ENCODE measurements at regions of chr2 and their contacts with region 1.

Region 1: DNA sequence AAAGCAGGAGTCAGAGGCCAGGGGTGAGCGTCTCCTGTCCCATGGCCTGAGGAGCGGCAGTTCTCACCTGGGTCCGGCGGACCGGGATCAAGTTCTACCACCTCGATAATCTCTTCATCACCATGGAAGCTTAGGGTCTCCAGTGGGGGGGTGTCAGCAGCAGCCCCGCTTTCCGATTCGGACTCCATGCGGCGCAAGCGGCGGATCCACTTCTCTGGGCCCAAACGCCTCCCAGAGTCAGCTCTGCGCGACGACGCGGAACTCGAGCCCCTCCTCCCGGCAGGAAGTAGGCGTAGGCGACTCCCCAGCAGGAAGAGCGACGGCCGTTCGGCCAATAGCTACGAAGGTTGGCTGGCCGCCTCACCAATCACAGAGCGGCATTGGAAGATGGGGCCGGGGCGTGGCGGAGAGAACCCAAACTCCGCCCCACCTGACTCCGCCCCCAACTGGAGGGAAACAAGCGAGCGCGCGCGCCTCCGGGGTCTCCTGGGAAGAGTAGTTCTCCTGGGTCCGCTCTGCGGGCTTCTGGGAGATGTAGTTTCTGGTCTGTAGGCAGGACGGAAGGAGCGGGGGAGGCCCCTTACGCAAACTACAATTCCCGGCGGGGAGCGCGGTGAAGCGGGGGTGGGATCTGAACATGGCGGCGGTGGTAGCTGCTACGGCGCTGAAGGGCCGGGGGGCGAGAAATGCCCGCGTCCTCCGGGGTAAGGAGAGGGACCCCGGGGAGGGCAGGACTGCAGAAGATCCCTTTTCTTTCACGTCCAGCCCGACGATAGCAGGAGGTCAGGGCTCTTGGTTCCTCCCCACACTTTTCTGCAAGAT is at the starts of genes AAMP and PNKD:
- DNase-seq: peak; percentile 96
- ATAC-seq: peak; percentile 92
- H3K4me3 ChIP-seq: peak within 1 kb of the TSS; percentile 90
- H3K27ac ChIP-seq: peak within 1 kb of the TSS; percentile 74
- H3K4me1 ChIP-seq: peaks cover 18% of the 10 kb centered on the region
- H3K27me3 ChIP-seq: no peaks in the 10 kb centered on the region
- CTCF ChIP-seq: peak in 2 of 3 experiments; percentile 10 to 33; a peak in 2 of 6 replicates
- EP300 ChIP-seq: no peak
- POLR2A ChIP-seq: peak; percentile 89
- RAD21 ChIP-seq: no peak
- polyA plus RNA-seq, gene AAMP: 4.4 to 5.5 TPM
- polyA plus RNA-seq, gene PNKD: 72.6 to 104 TPM

Region 2: DNA sequence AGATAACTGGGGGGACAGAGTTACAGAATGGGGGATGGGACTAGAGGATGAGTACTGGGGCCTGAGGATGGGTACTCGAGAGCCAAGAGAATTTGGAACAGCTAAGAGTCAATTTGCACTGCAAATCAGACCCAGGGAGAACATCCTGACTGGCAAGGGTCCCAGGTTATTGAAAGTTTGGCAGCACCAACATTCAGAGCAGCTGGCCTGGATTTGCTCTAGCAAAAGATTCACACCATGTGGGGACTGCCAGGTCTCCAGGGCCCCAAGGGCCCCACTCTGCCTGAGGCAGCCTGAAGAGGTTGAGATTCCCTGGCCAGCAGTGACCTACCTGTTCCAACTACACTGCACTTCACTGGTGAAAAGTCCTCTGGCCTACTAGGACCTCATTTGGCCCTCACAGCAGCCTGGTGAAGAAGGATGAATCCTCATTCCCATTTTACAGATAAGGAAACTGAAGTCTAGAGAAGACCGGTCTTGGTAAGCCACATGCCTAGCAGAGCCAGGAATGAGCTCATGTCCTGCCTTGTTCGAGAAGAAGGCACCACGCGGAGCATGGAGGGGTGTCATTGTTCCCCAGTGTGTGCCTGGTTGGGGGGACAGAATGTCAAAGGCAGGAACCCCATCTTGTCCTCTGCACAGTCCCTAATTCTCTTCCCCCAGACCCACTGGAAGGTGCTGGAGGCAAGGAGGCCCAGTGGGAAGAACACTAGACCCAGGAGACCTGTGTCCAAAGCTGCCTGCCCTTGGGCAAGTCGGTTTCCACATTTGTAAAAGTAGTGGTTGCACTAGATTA is 525.9 kb before region 1 on chr2:
- CTCF ChIA-PET with region 1: no interaction called
- POLR2A ChIA-PET with region 1: no interaction called
- RAD21 ChIA-PET with region 1: no interaction called
- SMC1A ChIA-PET with region 1: no interaction called
- in situ Hi-C with region 1: no loop called
- intact Hi-C with region 1: no loop called
- DNase-seq: no peak
- ATAC-seq: no peak
- H3K4me3 ChIP-seq: no peak overlapping the region
- H3K27ac ChIP-seq: no peak overlapping the region
- H3K4me1 ChIP-seq: no peaks in the 10 kb centered on the region
- H3K27me3 ChIP-seq: peaks cover 0 to under 1% of the 10 kb centered on the region in 2 experiments; a peak in 2 of 4 replicates
- CTCF ChIP-seq: no peak
- EP300 ChIP-seq: no peak
- POLR2A ChIP-seq: no peak
- RAD21 ChIP-seq: no peak

Region 3: DNA sequence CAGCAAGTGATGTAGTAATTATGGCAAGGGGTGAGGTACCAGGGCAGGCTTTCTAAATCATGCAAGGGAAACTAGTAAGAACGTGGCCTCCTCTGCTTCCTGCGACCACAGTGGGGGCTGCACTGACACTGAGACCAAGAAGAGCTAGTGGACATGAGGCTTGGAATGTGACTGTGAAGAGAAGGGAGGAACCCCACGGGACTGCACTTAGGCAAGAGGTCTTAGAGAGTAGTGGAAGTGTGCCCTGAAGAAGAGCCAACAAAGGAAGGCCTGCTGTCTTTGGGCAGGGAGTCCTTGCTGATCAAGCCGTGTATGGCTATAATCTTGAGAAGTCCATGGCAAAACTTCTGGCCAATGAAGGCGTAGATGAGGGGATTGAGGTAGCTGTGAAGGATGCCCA is 210.0 kb before region 1 on chr2:
- CTCF ChIA-PET with region 1: no interaction called
- POLR2A ChIA-PET with region 1: no interaction called
- RAD21 ChIA-PET with region 1: no interaction called
- SMC1A ChIA-PET with region 1: no interaction called
- in situ Hi-C with region 1: no loop called
- intact Hi-C with region 1: no loop called
- DNase-seq: no peak
- ATAC-seq: no peak
- H3K4me3 ChIP-seq: no peak overlapping the region
- H3K27ac ChIP-seq: no peak overlapping the region
- H3K4me1 ChIP-seq: peaks cover 11% of the 10 kb centered on the region
- H3K27me3 ChIP-seq: no peaks in the 10 kb centered on the region; a peak in 1 of 4 replicates
- CTCF ChIP-seq: no peak
- EP300 ChIP-seq: no peak
- POLR2A ChIP-seq: no peak
- RAD21 ChIP-seq: no peak

Region 4: DNA sequence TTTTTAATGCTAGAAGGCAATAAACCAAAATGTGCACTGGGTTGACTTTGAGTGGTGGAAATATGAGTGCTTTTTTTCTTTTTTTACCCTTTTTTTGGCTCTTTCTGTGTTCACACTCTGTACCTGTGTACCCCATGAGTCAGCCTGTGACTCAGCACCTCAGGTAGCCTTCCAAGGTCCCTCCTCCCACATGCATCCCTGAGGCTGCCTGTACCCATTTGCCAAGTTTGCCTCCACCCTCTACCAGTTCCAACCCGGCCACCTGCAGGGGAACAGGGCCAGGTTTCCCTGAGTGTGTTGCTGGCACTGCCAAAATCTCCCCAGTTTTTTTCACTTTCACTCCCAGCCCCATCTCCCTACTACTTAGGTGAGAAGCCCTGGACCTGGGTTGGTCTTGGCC is 117.3 kb before region 1 on chr2:
- CTCF ChIA-PET with region 1: no interaction called
- POLR2A ChIA-PET with region 1: no interaction called
- RAD21 ChIA-PET with region 1: no interaction called
- SMC1A ChIA-PET with region 1: no interaction called
- in situ Hi-C with region 1: no loop called
- intact Hi-C with region 1: no loop called
- DNase-seq: no peak
- ATAC-seq: no peak
- H3K4me3 ChIP-seq: no peak overlapping the region
- H3K27ac ChIP-seq: no peak overlapping the region
- H3K4me1 ChIP-seq: peaks cover 4% of the 10 kb centered on the region
- H3K27me3 ChIP-seq: peaks cover 0 to 2% of the 10 kb centered on the region in 2 experiments; a peak in 1 of 4 replicates
- CTCF ChIP-seq: no peak
- EP300 ChIP-seq: no peak
- POLR2A ChIP-seq: no peak
- RAD21 ChIP-seq: no peak

Region 5: DNA sequence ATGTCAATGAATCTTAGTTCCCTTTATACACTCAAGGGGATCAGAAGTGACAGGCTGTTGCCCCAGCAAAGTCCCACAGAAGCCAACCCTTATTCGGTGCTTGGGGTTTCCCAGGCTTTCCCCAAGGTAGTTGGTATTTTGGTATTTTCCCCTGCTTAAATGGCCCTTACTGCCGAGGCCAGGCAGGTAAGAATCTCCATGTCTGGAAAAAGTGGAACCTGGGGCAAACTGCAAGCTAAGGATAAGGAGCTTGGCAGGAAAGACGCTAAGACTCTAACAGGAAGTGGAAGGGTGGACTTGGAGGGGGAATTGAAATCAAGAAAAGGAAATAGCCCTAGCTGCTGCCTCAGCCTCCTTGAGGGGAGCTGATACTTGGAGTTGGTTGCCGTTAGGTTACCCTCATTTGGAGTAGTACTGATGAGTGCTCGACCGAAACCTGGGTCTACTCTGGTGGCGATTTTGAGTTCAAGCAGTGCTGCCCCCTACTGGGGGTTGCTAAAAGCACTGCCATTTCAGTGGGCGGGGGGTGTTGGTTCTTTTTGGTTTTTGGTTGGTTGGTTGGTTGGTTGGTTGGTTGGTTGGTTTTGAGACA is 12.6 kb before region 1 on chr2:
- CTCF ChIA-PET with region 1: interaction called, 22 read pairs
- POLR2A ChIA-PET with region 1: interaction called, 19 read pairs
- RAD21 ChIA-PET with region 1: interaction called, 8 read pairs
- SMC1A ChIA-PET with region 1: interaction called, 3 read pairs
- in situ Hi-C with region 1: no loop called
- intact Hi-C with region 1: no loop called
- DNase-seq: peak; percentile 56
- ATAC-seq: peak; percentile 90
- H3K4me3 ChIP-seq: no peak overlapping the region
- H3K27ac ChIP-seq: peak overlapping the region; percentile 31
- H3K4me1 ChIP-seq: peaks cover 31% of the 10 kb centered on the region
- H3K27me3 ChIP-seq: no peaks in the 10 kb centered on the region
- CTCF ChIP-seq: peak; percentile 58 to 77 (median 76)
- EP300 ChIP-seq: no peak
- POLR2A ChIP-seq: no peak
- RAD21 ChIP-seq: peak; percentile 51

Region 6: GRCh38 chr2:218292048-218293014 is 22.2 kb after region 1 on chr2 and contains the start of gene TMBIM1:
- CTCF ChIA-PET with region 1: interaction called, 154 read pairs
- POLR2A ChIA-PET with region 1: interaction called, 84 read pairs
- RAD21 ChIA-PET with region 1: interaction called, 141 read pairs
- SMC1A ChIA-PET with region 1: interaction called, 194 read pairs
- in situ Hi-C with region 1: no loop called
- intact Hi-C with region 1: loop called (anchors 1 kb)
- DNase-seq: no peak
- ATAC-seq: peak; percentile 87
- H3K4me3 ChIP-seq: peak within 1 kb of the TSS; percentile 85
- H3K27ac ChIP-seq: peak within 1 kb of the TSS; percentile 72
- H3K4me1 ChIP-seq: peaks cover 28% of the 10 kb centered on the region
- H3K27me3 ChIP-seq: no peaks in the 10 kb centered on the region
- CTCF ChIP-seq: peak; percentile 68 to 92 (median 85)
- EP300 ChIP-seq: no peak
- POLR2A ChIP-seq: peak; percentile 58
- RAD21 ChIP-seq: peak; percentile 51
- polyA plus RNA-seq, gene TMBIM1: 6.1 to 11.7 TPM

Region 7: DNA sequence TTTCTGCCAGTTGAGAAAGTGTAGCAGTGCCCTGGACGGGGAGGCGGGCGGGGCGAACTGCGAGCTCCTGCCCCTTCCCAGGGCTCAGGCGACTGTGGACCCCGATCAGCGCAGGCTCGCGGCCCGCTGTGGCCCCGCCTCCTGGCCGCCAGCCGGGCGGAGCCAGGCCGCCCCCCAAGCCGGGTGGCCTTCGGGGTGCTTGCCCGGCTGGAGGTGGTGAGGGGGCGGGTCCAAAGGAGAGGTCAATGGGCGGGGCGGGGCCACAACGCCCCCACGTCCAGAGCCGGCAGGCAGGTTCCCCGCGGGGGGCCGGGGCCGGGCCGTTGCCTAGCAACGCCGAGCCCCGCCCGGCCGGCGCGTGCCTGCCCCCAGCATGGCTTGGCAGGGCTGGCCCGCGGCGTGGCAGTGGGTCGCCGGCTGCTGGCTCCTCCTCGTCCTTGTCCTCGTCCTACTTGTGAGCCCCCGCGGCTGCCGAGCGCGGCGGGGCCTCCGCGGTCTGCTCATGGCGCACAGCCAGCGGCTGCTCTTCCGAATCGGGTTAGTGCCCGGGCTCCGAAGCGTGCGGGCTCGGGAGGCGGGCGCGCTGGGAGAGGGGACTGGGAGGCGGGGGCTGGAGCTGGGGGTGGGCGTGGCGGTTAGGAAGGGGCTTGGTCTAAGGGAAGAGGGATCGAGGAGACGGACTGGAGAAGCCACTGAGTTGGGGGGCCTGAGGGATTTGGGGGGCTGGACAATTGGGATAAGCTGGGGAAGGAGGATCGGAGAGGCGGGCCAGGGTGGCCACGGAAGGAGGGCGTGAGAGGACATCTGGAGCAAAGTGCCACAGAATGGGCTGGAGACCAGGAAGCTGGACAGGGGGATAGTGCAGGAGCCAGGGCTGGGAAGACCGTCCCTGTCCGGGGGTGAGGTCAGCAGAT is 53.0 kb after region 1 on chr2:
- CTCF ChIA-PET with region 1: interaction called, 10 read pairs
- POLR2A ChIA-PET with region 1: no interaction called
- RAD21 ChIA-PET with region 1: no interaction called
- SMC1A ChIA-PET with region 1: no interaction called
- in situ Hi-C with region 1: no loop called
- intact Hi-C with region 1: no loop called
- DNase-seq: no peak
- ATAC-seq: peak; percentile 87
- H3K4me3 ChIP-seq: peak overlapping the region; percentile 69
- H3K27ac ChIP-seq: no peak overlapping the region
- H3K4me1 ChIP-seq: peaks cover 15% of the 10 kb centered on the region
- H3K27me3 ChIP-seq: no peaks in the 10 kb centered on the region
- CTCF ChIP-seq: no peak
- EP300 ChIP-seq: no peak
- POLR2A ChIP-seq: peak; percentile 35; the same call in 1 of the 2 replicates
- RAD21 ChIP-seq: no peak

Region 8: DNA sequence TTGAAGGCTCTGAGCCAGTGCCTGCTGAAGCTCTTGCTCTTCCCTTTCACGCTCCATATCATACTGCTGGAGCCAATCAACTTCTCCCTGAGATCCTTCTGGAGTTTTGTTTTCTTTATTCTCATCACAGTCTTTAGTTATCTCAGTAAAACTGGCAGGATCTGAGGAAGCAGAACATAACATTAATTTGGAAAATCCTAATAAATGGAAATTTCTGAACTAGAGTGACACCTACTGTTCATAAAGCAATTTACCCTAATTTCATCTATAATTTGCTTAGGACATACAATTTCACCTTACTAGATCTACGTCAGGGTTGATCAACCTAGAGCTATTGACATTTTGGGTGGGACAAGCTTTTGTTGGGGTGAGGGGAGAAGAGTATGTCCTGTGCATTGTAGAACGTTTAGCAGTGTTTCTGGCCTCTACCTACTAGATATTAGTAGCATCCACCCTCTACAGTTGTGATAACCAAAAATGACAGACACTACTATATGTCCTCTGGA is 196.0 kb after region 1 on chr2:
- CTCF ChIA-PET with region 1: interaction called, 11 read pairs
- POLR2A ChIA-PET with region 1: no interaction called
- RAD21 ChIA-PET with region 1: interaction called, 3 read pairs
- SMC1A ChIA-PET with region 1: interaction called, 5 read pairs
- in situ Hi-C with region 1: no loop called
- intact Hi-C with region 1: no loop called
- DNase-seq: no peak
- ATAC-seq: peak; percentile 41; the same call in 1 of the 3 replicates
- H3K4me3 ChIP-seq: no peak overlapping the region
- H3K27ac ChIP-seq: no peak overlapping the region
- H3K4me1 ChIP-seq: no peaks in the 10 kb centered on the region
- H3K27me3 ChIP-seq: no peaks in the 10 kb centered on the region
- CTCF ChIP-seq: peak; percentile 14 to 42 (median 38); a peak in 3 of 6 replicates
- EP300 ChIP-seq: no peak
- POLR2A ChIP-seq: no peak
- RAD21 ChIP-seq: no peak

Measured in GM12878 (cell line).